OCI-LY7 (cell line): ENCODE measurements at regions of chr7 and their contacts with region 1.

Region 1: GRCh38 chr7:19834566-19834965 is 61.1 kb upstream of the TMEM196 start:
- DNase-seq: no peak
- H3K4me3 ChIP-seq: no peak overlapping the region
- H3K27ac ChIP-seq: no peak overlapping the region
- H3K4me1 ChIP-seq: no peaks in the 10 kb centered on the region
- CTCF ChIP-seq: no peak

Region 2: GRCh38 chr7:20128001-20128400 is 293.4 kb after region 1 on chr7:
- CTCF ChIA-PET with region 1: interaction called, 15 read pairs
- POLR2A ChIA-PET with region 1: no interaction called
- intact Hi-C with region 1: no loop called
- DNase-seq: no peak
- H3K4me3 ChIP-seq: no peak overlapping the region
- H3K27ac ChIP-seq: no peak overlapping the region
- H3K4me1 ChIP-seq: no peaks in the 10 kb centered on the region
- CTCF ChIP-seq: no peak